ENCODE measurements at regions of chr22 and their contacts with region 1.

Region 1: DNA sequence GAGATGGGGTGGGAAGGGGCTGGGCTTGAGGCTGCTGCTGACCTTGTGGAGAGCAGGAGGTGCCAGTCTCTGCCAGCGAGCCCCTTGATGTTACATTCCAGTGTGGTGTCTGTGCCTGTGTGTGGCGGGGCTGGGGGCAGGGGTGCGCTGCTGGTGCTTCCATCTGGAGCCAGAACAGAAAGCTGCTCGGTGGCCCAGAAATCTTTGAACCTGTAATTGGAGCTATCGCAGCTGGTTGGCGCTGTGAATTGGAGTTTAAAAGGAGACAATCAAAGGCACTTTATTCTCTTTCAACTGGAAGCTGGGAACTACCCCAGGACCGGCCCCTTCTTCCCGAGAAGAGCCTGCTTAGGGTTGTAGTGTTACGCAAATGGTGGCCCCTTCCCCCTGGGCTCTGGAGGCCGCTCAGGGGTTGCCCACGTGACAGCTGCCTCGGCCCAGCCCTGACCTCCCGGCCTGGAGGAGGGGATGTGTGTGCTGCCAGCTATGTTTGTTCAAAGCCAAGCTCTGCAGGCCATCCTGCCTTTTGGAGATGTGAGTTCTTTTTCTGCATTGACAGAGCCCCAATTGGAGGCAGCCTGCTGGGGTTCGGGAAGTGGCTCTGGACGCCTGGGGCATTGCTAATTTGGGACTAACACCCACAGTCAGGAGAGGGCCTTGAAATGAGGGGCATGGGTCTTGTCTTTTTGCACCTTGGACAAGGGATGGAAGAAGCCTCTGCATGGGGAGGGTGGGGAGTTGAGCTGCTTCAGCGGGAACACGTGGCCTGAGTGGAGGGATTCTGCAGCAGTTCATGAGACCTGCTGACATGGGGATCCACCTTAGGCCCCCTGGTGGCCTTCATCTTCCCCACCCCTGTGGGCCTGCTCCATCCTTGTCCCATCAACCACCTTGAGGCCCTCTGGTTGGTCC is 14.0 kb upstream of the ARSA start:
- DNase-seq: no peak
- H3K4me3 ChIP-seq: no peak overlapping the region
- CTCF ChIP-seq: peak; percentile 11

Region 2: GRCh38 chr22:50599786-50600455 is 42.0 kb before region 1 on chr22:
- CTCF ChIA-PET with region 1: no interaction called
- POLR2A ChIA-PET with region 1: no interaction called
- DNase-seq: no peak
- H3K4me3 ChIP-seq: no peak overlapping the region
- CTCF ChIP-seq: no peak

Region 3: DNA sequence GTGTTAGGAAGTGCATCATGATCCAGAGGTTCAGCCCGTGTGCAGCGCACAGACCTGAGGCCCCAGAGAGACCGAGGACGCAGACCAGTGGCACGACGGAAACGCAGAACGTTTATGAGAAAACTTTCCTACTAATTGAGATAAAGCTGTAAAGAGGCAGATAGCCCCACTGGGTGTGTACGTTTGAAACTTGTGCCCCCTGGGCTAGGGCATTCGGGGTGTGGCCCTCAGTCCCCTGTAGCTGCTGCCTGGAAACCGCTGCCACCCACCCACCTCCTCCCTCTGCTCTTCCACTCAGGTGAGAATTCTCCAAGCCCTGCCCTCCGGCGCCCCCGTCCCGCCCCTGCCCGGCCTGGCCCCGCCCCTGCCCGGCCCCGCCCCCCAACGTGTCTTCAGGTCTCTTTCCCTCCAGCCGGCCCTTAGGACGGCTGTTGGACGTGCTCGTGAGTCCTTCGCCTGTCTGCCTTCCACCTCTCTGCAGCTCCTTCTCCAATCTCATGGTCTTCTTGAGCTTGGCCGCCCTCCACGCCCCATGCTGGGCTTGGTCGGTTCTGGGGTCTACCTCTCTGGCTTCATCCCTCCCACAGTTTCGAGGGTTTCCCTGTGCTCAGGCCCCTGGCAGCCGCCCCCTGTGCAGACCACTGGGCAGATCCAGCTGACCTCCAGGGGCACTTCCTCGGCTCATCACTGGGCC is 29.3 kb before region 1 on chr22:
- CTCF ChIA-PET with region 1: no interaction called
- POLR2A ChIA-PET with region 1: no interaction called
- DNase-seq: no peak
- H3K4me3 ChIP-seq: no peak overlapping the region
- CTCF ChIP-seq: no peak

Region 4: GRCh38 chr22:50627642-50628542 is 14.1 kb before region 1 on chr22 and contains the start of gene ARSA:
- CTCF ChIA-PET with region 1: interaction called, 15 read pairs
- POLR2A ChIA-PET with region 1: no interaction called
- DNase-seq: peak; percentile 10
- H3K4me3 ChIP-seq: peak within 1 kb of the TSS; percentile 81
- CTCF ChIP-seq: peak; percentile 65

Region 5: DNA sequence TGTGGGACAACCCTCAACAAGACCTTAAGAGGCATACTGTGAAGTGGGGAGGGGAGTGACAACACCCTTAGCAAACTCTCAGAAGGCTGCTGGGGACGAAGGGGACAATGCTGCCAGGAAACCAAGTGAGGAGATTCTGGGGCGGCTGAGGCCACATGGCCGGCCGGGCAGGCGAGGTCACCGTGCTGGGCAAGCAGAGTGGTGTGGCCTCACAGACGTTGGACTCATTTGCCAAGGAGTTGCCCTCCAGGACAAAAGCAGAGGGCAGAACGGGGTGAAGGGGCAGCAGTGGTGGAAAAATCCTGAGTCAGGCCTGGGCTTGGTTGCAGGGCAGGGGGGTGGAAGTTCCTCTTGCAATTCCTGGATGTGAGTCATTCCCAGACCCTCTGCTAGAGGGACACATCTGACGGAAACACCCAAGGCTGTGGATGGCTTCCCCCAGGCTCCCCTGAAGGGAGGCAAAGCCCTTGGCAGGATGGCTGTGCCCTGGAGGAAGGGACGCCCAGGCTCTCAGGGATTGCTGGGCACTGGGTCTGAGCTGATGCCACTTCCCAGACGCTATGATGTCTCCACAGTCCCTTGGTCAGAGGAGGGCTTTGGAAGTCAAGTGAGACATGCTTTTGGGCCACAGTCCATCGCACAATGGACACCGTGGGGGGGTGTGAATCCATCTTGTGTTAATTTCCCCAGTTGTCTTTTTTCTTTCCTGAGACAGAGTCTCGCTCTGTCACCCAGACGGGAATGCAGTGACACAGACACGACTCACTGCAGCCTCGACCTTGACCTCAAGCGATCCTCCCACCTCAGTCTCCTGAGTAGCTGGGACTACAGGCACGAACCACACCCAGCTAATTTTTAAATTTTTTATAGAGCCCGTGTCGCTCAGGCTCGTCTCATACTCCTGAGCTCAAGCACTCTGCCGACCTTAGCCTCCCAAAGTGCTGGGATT is 14.4 kb after region 1 on chr22:
- CTCF ChIA-PET with region 1: interaction called, 12 read pairs
- POLR2A ChIA-PET with region 1: no interaction called
- DNase-seq: no peak
- H3K4me3 ChIP-seq: no peak overlapping the region
- CTCF ChIP-seq: no peak

Region 6: GRCh38 chr22:50691521-50691920 is 49.6 kb after region 1 on chr22:
- CTCF ChIA-PET with region 1: interaction called, 24 read pairs
- POLR2A ChIA-PET with region 1: no interaction called
- DNase-seq: no peak
- H3K4me3 ChIP-seq: no peak overlapping the region
- CTCF ChIP-seq: peak; percentile 20

Measured in AG04449 (cell line).